Endothelial cell of umbilical vein (primary cell): ENCODE measurements at regions of chr1 and their contacts with region 1.

Region 1: DNA sequence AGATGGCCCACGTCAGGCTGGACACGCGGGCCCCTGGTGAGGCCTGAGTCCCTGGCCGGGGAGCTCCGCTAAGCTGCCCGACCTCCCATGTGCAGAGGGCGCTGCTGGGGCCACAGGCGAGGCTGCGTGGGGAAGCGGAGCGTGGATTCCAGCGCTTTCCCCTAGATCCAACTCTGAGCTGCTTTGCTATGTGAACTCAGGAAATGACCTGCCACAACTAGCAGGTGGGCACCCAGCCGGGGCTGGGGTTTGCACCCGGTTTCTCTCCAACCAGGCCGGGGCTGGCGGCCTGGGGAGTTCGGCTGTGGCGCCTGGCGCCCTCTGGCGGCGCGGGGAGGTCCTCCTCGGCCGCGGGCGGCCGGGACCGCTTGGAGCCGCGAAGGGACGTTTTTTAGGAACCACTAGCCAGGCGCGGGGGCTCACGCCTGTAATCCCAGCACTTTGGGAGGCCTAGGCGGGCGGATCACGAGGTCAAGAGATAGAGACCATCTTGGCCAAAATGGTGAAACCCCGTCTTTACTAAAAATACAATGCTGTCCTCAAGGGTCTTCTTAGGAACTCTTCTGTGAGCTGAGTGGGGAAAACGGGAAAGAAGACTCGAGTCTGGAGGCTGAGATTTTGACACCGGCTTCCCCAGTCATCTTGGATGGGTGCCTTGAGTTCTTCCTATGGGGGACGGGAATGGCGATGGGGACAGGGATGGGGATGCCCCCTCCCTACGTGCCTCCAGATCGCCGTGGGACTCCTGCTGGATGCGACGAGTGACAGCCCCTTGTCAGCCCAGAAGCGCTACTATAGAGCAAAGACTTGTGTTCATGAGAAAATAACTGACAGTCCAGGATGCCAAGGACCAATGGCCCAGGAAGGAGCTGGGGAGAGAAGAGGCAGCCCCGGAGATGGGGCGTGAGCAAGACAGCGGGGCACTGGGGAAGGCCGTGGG is 12.6 kb downstream of the PYCR2 start:
- DNase-seq: peak; percentile 47
- H3K4me3 ChIP-seq: no peak overlapping the region
- H3K27ac ChIP-seq: no peak overlapping the region
- H3K4me1 ChIP-seq: no peaks in the 10 kb centered on the region
- H3K27me3 ChIP-seq: no peaks in the 10 kb centered on the region
- CTCF ChIP-seq: peak; percentile 88 to 90
- POLR2A ChIP-seq: no peak

Region 2: DNA sequence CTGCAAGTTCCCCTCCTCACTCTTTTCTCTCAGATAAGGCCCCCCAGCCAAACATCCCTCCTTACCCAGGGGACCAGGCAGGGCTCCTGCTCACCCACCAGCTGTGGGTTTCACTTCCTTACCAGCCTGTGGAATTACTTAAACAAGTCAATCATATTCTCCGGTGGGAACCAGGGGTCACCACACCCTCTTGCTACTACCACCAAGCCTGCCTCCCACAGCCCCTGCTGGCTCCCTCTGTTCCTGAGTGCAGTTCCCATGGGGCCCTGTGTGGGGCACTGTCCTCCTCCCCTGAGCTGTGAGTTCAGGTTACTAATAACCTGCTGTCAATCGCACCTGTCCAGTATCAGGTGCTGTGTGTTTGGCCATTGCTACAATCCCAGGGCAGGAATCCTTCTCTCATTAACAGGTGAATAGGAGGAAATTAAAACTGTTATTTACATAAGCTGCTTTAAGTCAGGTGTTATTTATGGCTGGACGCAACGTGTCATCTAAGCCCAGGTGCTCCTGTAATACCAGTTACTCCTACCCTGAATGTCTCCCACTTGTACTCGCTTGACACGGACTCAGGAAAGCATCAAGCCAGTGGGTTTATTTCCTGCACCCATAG is 430.5 kb before region 1 on chr1:
- CTCF ChIA-PET with region 1: interaction called, 82 read pairs
- POLR2A ChIA-PET with region 1: no interaction called
- dilution Hi-C with region 1: no loop called
- intact Hi-C with region 1: no loop called
- DNase-seq: peak; percentile 54
- H3K4me3 ChIP-seq: no peak overlapping the region
- H3K27ac ChIP-seq: no peak overlapping the region
- H3K4me1 ChIP-seq: no peaks in the 10 kb centered on the region
- H3K27me3 ChIP-seq: no peaks in the 10 kb centered on the region
- CTCF ChIP-seq: peak; percentile 86
- POLR2A ChIP-seq: no peak

Region 3: GRCh38 chr1:225809842-225810578 is 101.5 kb before region 1 on chr1 and contains the start of gene EPHX1:
- CTCF ChIA-PET with region 1: interaction called, 5 read pairs
- POLR2A ChIA-PET with region 1: no interaction called
- dilution Hi-C with region 1: no loop called
- intact Hi-C with region 1: loop called (anchors 1 kb)
- DNase-seq: peak; percentile 85
- H3K4me3 ChIP-seq: peak within 1 kb of the TSS in 2 of 3 experiments; percentile 43 to 70
- H3K27ac ChIP-seq: no peak within 1 kb of the TSS
- H3K4me1 ChIP-seq: peaks cover 8% of the 10 kb centered on the region
- H3K27me3 ChIP-seq: no peaks in the 10 kb centered on the region
- CTCF ChIP-seq: peak in 1 of 2 donors; percentile 40
- POLR2A ChIP-seq: peak; percentile 96
- total RNA-seq, gene EPHX1: 19.1 and 23.7 TPM in 2 replicates

Region 4: DNA sequence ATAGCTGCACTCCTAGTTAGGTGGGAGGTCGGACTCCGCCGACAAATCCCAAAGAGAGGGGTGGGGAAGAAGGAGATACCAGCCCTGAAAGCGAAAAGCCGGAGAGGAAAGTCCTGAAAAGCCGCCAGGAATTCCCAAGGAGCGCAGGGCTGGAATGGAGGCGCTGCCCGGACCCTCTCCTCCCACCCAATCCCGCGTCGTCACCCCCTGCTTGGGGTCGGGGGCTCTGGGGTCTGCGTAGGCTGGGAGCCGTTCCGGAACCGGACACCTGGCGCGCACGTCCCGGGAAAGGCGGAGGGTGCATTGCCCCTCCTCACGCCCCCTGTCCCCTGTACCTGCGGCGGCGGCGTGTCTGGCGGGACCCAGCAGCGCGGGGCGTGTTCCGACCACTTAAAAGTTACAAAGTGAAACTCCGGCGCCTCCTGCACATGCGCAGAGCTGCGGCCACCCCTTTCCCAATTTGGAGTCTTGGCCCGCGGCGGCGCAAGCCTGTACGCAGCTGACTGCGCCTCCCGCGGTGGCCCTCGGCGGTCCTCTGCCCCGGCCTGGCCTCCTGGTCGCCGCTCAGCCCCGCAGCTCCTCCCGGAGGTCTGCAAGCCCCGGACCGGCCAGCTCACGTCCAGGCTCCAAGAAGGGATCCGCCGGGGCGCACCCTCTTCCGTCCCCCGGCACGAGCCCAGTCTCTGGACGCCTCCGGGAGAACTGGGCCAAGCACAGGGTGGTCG is 29.3 kb before region 1 on chr1 and contains the start of gene TMEM63A:
- CTCF ChIA-PET with region 1: interaction called, 40 read pairs
- POLR2A ChIA-PET with region 1: no interaction called
- dilution Hi-C with region 1: no loop called
- intact Hi-C with region 1: loop called (anchors 1 kb)
- DNase-seq: peak; percentile 86
- H3K4me3 ChIP-seq: peak within 1 kb of the TSS; percentile 70 to 91 (median 81)
- H3K27ac ChIP-seq: peak within 1 kb of the TSS; percentile 38
- H3K4me1 ChIP-seq: peaks cover 14% of the 10 kb centered on the region
- H3K27me3 ChIP-seq: no peaks in the 10 kb centered on the region
- CTCF ChIP-seq: peak; percentile 16 to 37
- POLR2A ChIP-seq: no peak
- total RNA-seq, gene TMEM63A: 40.8 and 41.4 TPM in 2 replicates

Region 5: DNA sequence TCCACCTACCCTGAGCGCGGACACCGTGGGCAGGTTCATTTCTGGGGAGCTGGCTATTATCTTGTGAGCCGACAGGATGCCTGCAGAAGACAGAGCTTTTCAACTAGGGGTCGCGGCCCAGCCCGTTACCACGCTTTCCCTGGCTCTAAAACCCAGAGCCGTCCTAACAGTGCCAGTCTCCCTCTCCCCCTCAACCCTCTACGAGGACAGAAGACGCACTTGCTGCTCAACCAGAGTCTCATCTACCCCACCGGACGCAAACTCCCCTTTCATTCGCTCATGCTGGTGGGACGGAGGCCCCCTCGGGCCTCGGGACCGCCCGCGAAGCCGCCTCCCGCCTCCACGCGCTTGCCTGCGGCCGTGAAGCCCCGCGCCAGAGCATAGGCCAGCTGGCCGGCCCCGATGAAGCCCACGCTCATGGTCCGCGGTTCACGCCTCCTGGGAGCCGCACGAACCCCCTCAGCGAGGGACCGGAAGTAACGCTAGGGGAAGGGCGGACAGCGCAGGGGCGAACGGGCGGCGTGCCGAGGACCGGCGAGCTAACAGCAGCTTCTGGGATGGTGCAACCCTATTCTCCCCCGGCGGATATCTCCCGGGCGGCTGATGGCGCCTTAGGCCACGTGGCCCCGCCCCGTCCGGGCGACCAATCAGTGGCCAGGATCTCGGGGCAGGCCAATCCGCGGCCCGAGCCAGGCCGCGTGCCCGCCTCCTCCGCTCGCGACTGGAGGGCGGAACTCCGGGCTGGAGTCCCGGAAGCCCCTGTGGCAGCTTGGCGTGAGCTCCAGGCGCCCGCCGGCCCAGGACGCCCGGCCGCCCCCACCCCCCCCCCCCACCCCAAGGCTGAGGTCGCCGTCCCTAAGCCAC is 12.5 kb after region 1 on chr1 and contains the start of gene PYCR2:
- CTCF ChIA-PET with region 1: interaction called, 10 read pairs
- POLR2A ChIA-PET with region 1: no interaction called
- dilution Hi-C with region 1: no loop called
- intact Hi-C with region 1: no loop called
- DNase-seq: peak; percentile 97
- H3K4me3 ChIP-seq: peak within 1 kb of the TSS; percentile 15 to 69 (median 59)
- H3K27ac ChIP-seq: peak within 1 kb of the TSS; percentile 69
- H3K4me1 ChIP-seq: peaks cover 19% of the 10 kb centered on the region
- H3K27me3 ChIP-seq: no peaks in the 10 kb centered on the region
- CTCF ChIP-seq: no peak
- POLR2A ChIP-seq: peak; percentile 94
- total RNA-seq, gene PYCR2: 60.4 and 64.6 TPM in 2 replicates

Region 6: DNA sequence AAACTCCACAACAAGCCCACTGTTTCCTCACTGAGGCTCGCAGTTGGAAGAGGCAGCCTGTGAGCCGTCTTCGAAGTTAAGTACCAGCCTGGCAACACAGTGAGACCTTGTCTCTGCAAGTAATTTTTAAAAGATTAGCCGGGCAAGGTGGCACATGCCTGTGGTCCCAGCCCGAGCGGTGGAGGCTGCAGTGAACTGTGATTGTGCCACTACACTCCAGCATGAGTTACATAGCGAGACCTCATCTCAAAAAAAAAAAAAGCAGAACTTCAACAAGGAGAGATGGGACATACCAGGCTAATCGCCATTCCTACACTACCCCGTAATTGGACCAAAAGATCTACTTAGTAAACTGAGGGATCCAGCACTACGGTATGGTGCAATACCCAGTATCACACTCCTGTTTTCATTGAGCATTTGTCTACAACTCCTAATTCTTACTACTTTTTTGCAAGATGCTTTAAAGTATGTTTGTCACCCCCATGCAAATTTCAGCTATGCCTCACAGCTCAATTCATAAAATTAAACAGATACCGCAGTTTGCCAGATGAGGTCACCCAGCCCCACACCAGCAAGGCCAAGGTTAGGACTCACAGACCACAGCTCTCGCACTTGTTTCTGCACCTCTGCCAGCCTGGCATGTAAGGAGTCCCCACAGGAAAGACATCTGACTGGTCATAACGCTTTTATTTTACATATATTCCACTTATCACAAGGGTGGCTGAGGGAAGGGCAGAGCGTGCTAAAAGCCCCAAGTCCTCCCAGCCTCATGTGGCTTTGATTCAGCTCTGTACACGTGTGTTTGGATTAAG is 66.7 kb after region 1 on chr1:
- CTCF ChIA-PET with region 1: interaction called, 10 read pairs
- POLR2A ChIA-PET with region 1: no interaction called
- dilution Hi-C with region 1: no loop called
- intact Hi-C with region 1: loop called (anchors 1 kb)
- DNase-seq: no peak
- H3K4me3 ChIP-seq: no peak overlapping the region
- H3K27ac ChIP-seq: no peak overlapping the region
- H3K4me1 ChIP-seq: no peaks in the 10 kb centered on the region
- H3K27me3 ChIP-seq: no peaks in the 10 kb centered on the region
- CTCF ChIP-seq: no peak
- POLR2A ChIP-seq: no peak